T-cell (primary cell): ENCODE measurements at regions of chr7 and their contacts with region 1.

Region 1: GRCh38 chr7:140222814-140223213 is 46.0 kb upstream of the KDM7A start:
- DNase-seq: no peak
- ATAC-seq: peak in 2 of 4 experiments; percentile 28 to 37
- H3K4me3 ChIP-seq: no peak overlapping the region
- H3K4me3 Mint-ChIP-seq: peak overlapping the region in 1 of 3 donors; percentile 62
- H3K27ac ChIP-seq: no peak overlapping the region
- H3K27ac Mint-ChIP-seq: peak overlapping the region; percentile 66 to 95
- H3K4me1 ChIP-seq: peaks cover 42 to 44% of the 10 kb centered on the region in 2 experiments
- H3K4me1 Mint-ChIP-seq: peaks cover 43 to 50% (median 43%) of the 10 kb centered on the region in 3 donors
- H3K27me3 ChIP-seq: no peaks in the 10 kb centered on the region
- H3K27me3 Mint-ChIP-seq: no peaks in the 10 kb centered on the region

Region 2: DNA sequence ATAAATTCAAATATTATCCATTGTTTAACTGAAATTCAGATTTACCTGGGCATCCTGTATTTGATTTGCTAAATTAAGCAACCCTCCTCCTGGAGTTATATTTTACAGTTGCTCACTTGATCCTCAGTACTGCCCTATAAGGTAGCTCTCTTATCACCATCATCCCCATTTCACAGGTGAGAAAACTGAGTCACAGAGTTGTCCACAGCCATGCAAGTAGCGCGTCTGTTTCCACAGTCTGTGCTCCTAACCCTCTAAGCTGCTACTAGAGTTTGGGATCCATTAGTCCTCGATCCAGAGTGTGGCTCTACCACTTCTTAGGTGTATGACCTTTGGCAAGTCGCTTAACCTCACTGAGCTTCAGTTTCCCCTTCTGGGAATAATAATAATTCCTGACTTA is 11.1 kb before region 1 on chr7:
- CTCF ChIA-PET with region 1: interaction called, 4 read pairs
- POLR2A ChIA-PET with region 1: interaction called, 3 to 11 read pairs
- DNase-seq: no peak
- ATAC-seq: no peak
- H3K4me3 ChIP-seq: no peak overlapping the region
- H3K4me3 Mint-ChIP-seq: no peak overlapping the region
- H3K27ac ChIP-seq: no peak overlapping the region
- H3K27ac Mint-ChIP-seq: peak overlapping the region; percentile 73 to 79
- H3K4me1 ChIP-seq: peaks cover 7 to 35% of the 10 kb centered on the region in 2 experiments
- H3K4me1 Mint-ChIP-seq: peaks cover 41 to 71% (median 51%) of the 10 kb centered on the region in 3 donors
- H3K27me3 ChIP-seq: no peaks in the 10 kb centered on the region
- H3K27me3 Mint-ChIP-seq: no peaks in the 10 kb centered on the region